Panc1 (cell line): ENCODE measurements at regions of chr17 and their contacts with region 1.

Region 1: GRCh38 chr17:71480099-71480498 is 640.7 kb upstream of the SOX9 start:
- DNase-seq: no peak
- ATAC-seq: no peak
- H3K4me3 ChIP-seq: no peak overlapping the region
- H3K27ac ChIP-seq: no peak overlapping the region
- H3K4me1 ChIP-seq: no peaks in the 10 kb centered on the region
- H3K27me3 ChIP-seq: no peaks in the 10 kb centered on the region; the same call in 1 of the 2 replicates
- CTCF ChIP-seq: no peak

Region 2: GRCh38 chr17:71438631-71439146 is 41.4 kb before region 1 on chr17:
- CTCF ChIA-PET with region 1: no interaction called
- POLR2A ChIA-PET with region 1: interaction called, 11 read pairs
- in situ Hi-C with region 1: no loop called
- intact Hi-C with region 1: no loop called
- DNase-seq: peak; percentile 95
- ATAC-seq: peak; percentile 99
- H3K4me3 ChIP-seq: no peak overlapping the region
- H3K27ac ChIP-seq: no peak overlapping the region
- H3K4me1 ChIP-seq: peaks cover 7% of the 10 kb centered on the region
- H3K27me3 ChIP-seq: no peaks in the 10 kb centered on the region
- CTCF ChIP-seq: peak; percentile 23; the same call in 1 of the 2 replicates